PC-9 (cell line): ENCODE measurements at regions of chr14 and their contacts with region 1.

Region 1: GRCh38 chr14:24976602-24977001 is 73.3 kb downstream of the STXBP6 start:
- DNase-seq: no peak
- H3K4me3 ChIP-seq: no peak overlapping the region
- H3K27ac ChIP-seq: no peak overlapping the region
- H3K4me1 ChIP-seq: no peaks in the 10 kb centered on the region
- H3K27me3 ChIP-seq: no peaks in the 10 kb centered on the region
- CTCF ChIP-seq: no peak

Region 2: GRCh38 chr14:24828486-24828885 is 148.1 kb before region 1 on chr14:
- CTCF ChIA-PET with region 1: no interaction called
- POLR2A ChIA-PET with region 1: no interaction called
- intact Hi-C with region 1: no loop called
- DNase-seq: no peak
- H3K4me3 ChIP-seq: no peak overlapping the region
- H3K27ac ChIP-seq: no peak overlapping the region
- H3K4me1 ChIP-seq: no peaks in the 10 kb centered on the region
- H3K27me3 ChIP-seq: no peaks in the 10 kb centered on the region
- CTCF ChIP-seq: no peak

Region 3: GRCh38 chr14:24954037-24954699 is 22.4 kb before region 1 on chr14:
- CTCF ChIA-PET with region 1: no interaction called
- POLR2A ChIA-PET with region 1: interaction called, 15 read pairs
- intact Hi-C with region 1: no loop called
- DNase-seq: no peak
- H3K4me3 ChIP-seq: no peak overlapping the region
- H3K27ac ChIP-seq: no peak overlapping the region
- H3K4me1 ChIP-seq: no peaks in the 10 kb centered on the region
- H3K27me3 ChIP-seq: no peaks in the 10 kb centered on the region
- CTCF ChIP-seq: no peak

Region 4: DNA sequence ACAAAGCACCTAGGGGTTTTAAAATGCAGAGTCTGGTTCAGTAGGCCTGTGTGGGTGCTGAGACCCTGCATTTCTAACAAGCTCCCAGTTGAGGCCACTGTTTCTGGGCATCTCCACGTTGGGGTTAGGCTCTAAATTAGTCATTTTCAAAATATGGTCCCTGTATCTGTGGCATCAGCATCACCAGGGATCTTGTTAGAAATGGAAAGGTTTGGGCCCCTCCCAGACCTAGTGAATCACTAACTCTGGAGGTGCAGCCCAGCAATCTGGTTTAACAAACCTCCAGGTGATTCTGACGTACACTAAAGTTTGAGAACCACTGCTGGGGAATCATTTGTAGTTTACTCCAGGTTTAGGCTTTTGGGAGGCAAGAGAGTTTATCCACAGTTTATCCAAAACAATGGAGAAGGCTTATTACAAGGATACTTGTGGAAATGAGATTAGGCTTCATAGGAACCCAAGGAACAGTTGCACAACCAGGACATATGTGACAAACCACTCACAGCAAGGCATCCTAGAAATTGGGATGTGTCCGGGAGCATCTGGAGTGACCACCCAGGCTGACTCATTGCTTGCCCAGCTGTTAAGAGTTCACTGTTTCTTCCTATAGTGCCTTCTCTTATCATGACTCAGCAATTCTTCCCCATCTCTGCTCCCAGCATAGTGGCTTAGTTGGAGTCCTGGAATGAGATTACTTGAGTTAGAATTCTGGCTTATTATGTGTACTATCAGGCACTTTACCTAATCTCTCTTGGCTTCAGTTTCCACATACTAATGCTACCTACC is 144.9 kb after region 1 on chr14:
- CTCF ChIA-PET with region 1: no interaction called
- POLR2A ChIA-PET with region 1: no interaction called
- intact Hi-C with region 1: no loop called
- DNase-seq: peak; percentile 38 to 47
- H3K4me3 ChIP-seq: no peak overlapping the region
- H3K27ac ChIP-seq: no peak overlapping the region
- H3K4me1 ChIP-seq: no peaks in the 10 kb centered on the region
- H3K27me3 ChIP-seq: no peaks in the 10 kb centered on the region
- CTCF ChIP-seq: no peak

Region 5: GRCh38 chr14:25472700-25473099 is 496.1 kb after region 1 on chr14:
- CTCF ChIA-PET with region 1: no interaction called
- POLR2A ChIA-PET with region 1: no interaction called
- intact Hi-C with region 1: no loop called
- DNase-seq: no peak
- H3K4me3 ChIP-seq: no peak overlapping the region
- H3K27ac ChIP-seq: no peak overlapping the region
- H3K4me1 ChIP-seq: no peaks in the 10 kb centered on the region
- H3K27me3 ChIP-seq: no peaks in the 10 kb centered on the region
- CTCF ChIP-seq: no peak